Calu3 (cell line): ENCODE measurements at regions of chr2 and their contacts with region 1.

Region 1: DNA sequence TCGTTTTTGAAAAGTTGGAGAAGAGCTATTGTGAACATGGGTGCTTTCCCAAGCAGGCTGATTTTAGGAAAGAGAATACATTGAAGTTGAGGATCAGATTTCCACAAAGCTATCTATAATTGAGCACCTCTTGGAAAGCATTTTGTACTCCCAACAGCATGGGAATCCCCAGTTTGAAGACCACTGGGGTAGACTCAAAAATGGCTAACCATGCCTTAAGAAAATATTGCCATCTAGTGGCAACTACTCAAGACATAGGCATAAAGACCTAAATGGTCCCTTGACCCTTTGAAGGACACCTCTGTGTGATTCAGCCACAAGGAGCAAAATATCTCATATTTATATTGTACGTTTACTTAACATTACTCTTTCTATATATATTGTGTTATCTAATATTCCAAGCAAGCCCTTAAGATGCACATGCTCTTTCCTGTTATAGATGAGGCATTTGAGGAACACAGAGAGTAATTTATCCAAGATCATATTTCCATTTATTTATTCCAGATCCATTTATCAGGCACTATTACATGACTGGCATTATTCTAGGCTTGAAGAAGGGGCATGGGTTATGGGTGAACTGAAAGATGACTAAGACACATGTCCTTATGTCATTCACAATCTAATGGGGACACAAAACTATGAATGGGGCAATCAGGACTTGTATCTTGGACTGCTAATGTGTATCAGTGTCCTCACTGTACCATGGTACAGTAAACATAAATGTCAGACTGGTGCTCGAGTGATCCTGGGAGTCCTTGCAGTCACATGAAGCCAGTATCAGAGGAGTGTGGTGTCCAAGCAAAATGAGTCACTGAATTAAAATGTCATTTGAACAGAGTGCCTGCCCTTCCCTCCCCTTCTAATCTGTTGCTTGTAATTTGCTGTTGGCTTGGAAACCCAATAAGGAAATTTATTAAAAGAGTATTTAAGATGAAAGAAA is 121.0 kb upstream of the XPO1 start:
- DNase-seq: peak; percentile 48
- H3K4me3 Mint-ChIP-seq: peak overlapping the region; percentile 39
- H3K27ac Mint-ChIP-seq: peak overlapping the region; percentile 95
- H3K4me1 Mint-ChIP-seq: peaks cover 53% of the 10 kb centered on the region
- H3K27me3 Mint-ChIP-seq: no peaks in the 10 kb centered on the region
- CTCF ChIP-seq: peak; percentile 45

Region 2: GRCh38 chr2:61426267-61426897 is 232.7 kb before region 1 on chr2:
- CTCF ChIA-PET with region 1: interaction called, 3 read pairs
- intact Hi-C with region 1: loop called (anchors 5 kb)
- DNase-seq: peak; percentile 73
- H3K4me3 Mint-ChIP-seq: no peak overlapping the region
- H3K27ac Mint-ChIP-seq: no peak overlapping the region
- H3K4me1 Mint-ChIP-seq: peaks cover 11% of the 10 kb centered on the region
- H3K27me3 Mint-ChIP-seq: no peaks in the 10 kb centered on the region
- CTCF ChIP-seq: peak; percentile 49

Region 3: DNA sequence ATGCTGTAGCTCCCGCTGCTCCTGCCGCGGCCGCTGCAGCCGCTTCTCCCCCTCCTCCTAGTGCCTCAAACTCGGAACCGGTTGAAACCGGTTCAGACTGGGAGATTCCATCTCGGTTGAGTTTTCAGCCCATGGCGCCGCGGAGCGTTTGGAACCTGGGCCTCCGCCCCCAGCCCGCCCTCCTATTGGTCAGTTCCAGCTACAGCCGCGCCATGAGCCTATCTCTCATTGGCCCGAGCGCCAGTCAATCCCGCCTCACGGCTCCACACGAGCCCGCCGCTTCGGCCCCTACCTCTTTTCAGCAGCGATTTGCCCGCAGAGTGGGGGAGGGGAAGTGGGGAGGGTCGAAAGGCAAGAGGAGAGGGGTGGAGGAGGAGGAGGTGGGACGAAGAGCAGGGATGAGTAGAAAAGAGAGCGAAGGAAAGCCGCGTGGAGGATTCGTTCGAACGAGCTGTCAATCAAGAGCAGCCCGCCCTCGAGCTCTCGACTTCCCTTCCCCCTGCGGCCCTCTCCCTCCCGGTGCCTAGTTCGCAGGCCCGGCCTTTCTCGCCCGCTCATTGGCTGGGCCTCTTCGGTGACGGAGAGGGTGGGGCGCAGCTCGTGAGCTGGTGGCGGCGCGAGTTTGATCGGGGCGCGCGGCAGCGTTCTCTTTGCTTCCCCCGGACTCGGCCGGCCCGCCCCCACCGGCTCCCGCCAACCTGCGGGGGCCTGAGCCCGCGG is 120.8 kb before region 1 on chr2 and contains the start of gene XPO1:
- CTCF ChIA-PET with region 1: interaction called, 4 read pairs
- intact Hi-C with region 1: loop called (anchors 1 kb)
- DNase-seq: peak; percentile 99
- H3K4me3 Mint-ChIP-seq: peak within 1 kb of the TSS; percentile 86
- H3K27ac Mint-ChIP-seq: peak within 1 kb of the TSS; percentile 98
- H3K4me1 Mint-ChIP-seq: peaks cover 8% of the 10 kb centered on the region
- H3K27me3 Mint-ChIP-seq: no peaks in the 10 kb centered on the region
- CTCF ChIP-seq: no peak
- total RNA-seq, gene XPO1: 214 and 223 TPM in 2 replicates

Region 4: DNA sequence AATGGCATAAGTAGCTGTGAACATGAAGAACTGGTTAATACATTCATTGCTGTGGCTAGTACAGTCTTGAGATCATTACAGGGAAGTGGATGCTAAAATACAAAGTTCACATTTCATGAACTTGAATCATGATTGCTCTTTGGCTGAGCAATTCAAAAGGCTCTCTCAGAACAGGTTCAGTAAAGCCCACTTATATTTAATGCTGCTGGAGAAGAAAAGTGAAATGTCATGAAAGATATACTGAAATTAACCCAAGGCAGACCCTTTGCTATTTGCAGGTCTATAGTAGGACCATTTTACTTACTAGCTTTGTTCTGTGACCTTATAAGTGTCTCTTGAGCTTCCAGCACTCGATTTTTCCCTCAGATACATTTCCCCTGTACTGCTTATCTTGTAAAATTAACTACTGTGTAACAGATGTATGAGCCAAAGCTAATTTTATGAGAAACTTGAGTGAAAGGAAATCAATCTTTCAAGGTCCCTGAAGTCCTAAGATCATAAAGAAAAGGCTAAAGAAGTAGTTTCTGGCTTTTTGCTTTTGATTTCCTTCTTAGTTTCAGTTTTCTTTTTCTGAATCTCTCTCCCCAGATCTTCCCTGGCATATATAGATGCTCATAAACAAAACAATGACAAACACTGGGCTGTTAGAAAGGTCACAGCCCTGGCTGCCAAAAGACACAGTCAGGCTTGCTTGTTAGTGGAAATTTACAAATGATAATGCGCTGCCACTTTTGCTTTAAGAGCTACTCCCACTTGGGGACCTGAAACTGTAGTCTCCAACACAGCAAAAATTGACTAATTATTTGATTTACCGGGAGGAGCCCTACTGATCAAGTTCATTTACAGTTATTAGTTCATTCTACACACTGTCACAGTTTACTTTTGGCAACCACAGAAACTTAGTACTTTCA is 11.7 kb after region 1 on chr2:
- CTCF ChIA-PET with region 1: interaction called, 15 read pairs
- intact Hi-C with region 1: loop called (anchors 1 kb)
- DNase-seq: no peak
- H3K4me3 Mint-ChIP-seq: peak overlapping the region; percentile 57
- H3K27ac Mint-ChIP-seq: peak overlapping the region; percentile 97
- H3K4me1 Mint-ChIP-seq: peaks cover 45% of the 10 kb centered on the region
- H3K27me3 Mint-ChIP-seq: no peaks in the 10 kb centered on the region
- CTCF ChIP-seq: no peak

Region 5: DNA sequence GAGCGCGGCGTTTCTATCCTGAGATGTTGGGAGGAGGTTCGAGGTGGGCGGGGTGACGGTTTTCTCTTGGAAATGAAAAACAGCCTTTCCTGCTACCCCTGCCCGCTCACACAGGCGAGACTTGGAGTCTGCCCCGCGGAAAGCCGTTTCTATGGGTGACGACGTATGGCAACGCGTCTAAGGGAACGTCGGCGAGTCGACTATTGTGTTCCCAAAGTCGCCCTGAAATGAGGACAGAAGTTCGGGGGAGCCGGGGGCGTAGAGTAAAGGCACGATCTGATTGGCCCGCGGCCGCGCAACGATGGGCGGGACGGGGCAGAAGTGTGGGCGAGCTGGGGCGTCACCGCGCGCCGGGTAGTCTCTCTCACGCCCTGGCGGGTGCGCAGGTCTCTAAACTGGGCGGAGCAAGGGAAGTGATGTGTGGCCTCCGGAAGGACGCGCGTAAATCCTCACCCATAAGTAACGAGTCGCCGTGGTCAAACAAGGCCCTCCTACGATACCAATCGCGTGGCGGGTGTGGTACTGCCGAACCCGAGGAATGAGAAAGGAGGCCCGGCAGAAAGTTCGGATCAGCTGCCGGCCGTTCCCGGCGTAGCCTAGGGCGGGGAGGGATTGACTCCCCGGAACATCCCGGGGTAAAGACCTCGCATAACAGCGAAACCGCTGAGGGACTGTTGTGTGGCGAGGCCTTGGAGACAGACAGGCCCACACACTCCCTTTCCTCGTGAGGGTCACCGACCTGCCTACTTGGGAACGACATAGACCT is 105.1 kb after region 1 on chr2:
- CTCF ChIA-PET with region 1: no interaction called
- intact Hi-C with region 1: loop called (anchors 2 kb)
- DNase-seq: peak; percentile 98
- H3K4me3 Mint-ChIP-seq: peak overlapping the region; percentile 93
- H3K27ac Mint-ChIP-seq: peak overlapping the region; percentile 99
- H3K4me1 Mint-ChIP-seq: peaks cover 12% of the 10 kb centered on the region
- H3K27me3 Mint-ChIP-seq: no peaks in the 10 kb centered on the region
- CTCF ChIP-seq: no peak